CD4-positive, alpha-beta memory T cell (primary cell): ENCODE measurements at regions of chr6 and their contacts with region 1.

Region 1: GRCh38 chr6:149140137-149140909 is 177.2 kb upstream of the TAB2 start:
- DNase-seq: peak; percentile 51 to 91 (median 64)
- H3K4me3 ChIP-seq: peak overlapping the region; percentile 6 to 47
- H3K4me3 Mint-ChIP-seq: peak overlapping the region; percentile 67 to 90 (median 76)
- H3K27ac ChIP-seq: peak overlapping the region; percentile 95
- H3K27ac Mint-ChIP-seq: peak overlapping the region; percentile 94 to 100 (median 99)
- H3K4me1 ChIP-seq: peaks cover 66% of the 10 kb centered on the region
- H3K4me1 Mint-ChIP-seq: peaks cover 31 to 61% (median 46%) of the 10 kb centered on the region in 4 donors
- H3K27me3 ChIP-seq: no peaks in the 10 kb centered on the region
- H3K27me3 Mint-ChIP-seq: no peaks in the 10 kb centered on the region

Region 2: DNA sequence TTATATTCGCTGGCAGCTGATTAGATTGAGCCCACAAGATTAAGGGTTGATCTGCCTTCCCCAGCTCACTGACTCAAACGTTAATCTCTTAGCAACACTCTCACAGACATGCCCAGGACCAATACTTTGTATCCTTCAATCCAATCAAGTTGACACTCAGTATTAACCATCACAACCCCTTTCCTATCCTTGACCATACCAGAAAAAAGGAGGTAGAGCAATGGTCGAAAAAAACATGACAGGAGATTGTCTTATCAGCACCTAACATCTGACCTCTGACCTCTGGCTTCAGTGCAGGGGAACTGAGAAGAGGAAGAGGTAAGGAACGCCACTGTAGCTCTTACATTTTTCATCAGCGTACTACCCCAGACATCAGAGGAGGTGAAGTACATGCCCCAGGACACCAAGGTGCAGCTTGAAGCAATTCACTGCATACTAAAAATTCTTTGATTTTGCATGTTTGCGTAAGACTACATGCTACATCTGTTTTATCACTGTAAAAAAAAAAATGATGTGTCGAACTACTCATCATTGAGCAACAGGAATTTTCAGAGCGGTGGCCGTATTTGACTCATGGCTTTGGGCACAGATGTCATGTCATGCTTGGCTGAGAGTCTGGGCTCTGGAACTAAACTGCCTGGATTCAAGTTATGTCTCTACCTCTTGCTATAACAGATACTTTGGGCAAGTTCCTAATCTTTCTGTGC is 10.8 kb before region 1 on chr6:
- CTCF ChIA-PET with region 1: interaction called, 7 read pairs
- POLR2A ChIA-PET with region 1: interaction called, 38 read pairs
- intact Hi-C with region 1: no loop called
- DNase-seq: no peak
- H3K4me3 ChIP-seq: no peak overlapping the region
- H3K4me3 Mint-ChIP-seq: peak overlapping the region in 4 of 8 donors; percentile 0 to 74 (median 16)
- H3K27ac ChIP-seq: no peak overlapping the region
- H3K27ac Mint-ChIP-seq: peak overlapping the region; percentile 85 to 94 (median 93)
- H3K4me1 ChIP-seq: peaks cover 76% of the 10 kb centered on the region
- H3K4me1 Mint-ChIP-seq: peaks cover 45 to 77% (median 64%) of the 10 kb centered on the region in 4 donors
- H3K27me3 ChIP-seq: no peaks in the 10 kb centered on the region
- H3K27me3 Mint-ChIP-seq: no peaks in the 10 kb centered on the region